Activated CD4-positive, alpha-beta memory T cell treated with anti-CD3 and anti-CD28 coated beads for 36 hours (primary cell): ENCODE measurements at regions of chr5 and their contacts with region 1.

Region 1: DNA sequence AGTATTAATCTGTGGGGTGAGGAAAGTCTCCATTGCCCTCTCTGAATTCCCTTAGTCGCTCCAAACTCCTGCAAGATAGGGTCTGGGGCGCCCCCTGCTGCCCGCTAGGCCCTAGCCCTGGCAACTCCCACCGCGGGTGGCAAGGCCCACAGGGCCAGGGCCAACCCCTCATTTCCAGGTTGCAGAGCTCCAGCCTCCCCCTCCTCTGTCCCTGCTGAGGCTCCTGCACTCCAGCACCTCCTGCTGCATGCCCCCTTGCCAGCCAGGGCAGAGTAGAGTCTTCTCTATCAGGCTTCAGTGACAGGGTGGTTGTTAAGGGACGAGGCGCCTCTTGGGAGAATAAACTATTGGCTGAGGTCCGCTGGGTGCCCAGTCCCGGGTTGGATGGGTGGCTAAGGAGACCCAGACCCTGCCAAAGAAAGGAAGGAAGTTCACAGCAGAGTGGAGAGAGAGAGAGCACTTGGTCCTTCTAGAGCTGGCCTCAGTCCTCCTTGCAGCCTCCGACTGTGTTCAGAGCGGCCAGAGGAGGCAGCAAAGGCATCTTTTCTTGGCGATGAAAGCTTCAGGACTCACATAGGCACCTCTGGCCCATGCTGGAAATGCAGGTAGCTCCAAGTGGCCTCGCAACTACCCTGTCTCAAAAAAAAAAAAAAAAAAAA is 45.6 kb downstream of the SAR1B start:
- DNase-seq: peak; percentile 92
- H3K4me3 Mint-ChIP-seq: no peak overlapping the region
- H3K27ac Mint-ChIP-seq: peak overlapping the region; percentile 16
- H3K4me1 Mint-ChIP-seq: peaks cover 16% of the 10 kb centered on the region
- H3K27me3 Mint-ChIP-seq: no peaks in the 10 kb centered on the region

Region 2: DNA sequence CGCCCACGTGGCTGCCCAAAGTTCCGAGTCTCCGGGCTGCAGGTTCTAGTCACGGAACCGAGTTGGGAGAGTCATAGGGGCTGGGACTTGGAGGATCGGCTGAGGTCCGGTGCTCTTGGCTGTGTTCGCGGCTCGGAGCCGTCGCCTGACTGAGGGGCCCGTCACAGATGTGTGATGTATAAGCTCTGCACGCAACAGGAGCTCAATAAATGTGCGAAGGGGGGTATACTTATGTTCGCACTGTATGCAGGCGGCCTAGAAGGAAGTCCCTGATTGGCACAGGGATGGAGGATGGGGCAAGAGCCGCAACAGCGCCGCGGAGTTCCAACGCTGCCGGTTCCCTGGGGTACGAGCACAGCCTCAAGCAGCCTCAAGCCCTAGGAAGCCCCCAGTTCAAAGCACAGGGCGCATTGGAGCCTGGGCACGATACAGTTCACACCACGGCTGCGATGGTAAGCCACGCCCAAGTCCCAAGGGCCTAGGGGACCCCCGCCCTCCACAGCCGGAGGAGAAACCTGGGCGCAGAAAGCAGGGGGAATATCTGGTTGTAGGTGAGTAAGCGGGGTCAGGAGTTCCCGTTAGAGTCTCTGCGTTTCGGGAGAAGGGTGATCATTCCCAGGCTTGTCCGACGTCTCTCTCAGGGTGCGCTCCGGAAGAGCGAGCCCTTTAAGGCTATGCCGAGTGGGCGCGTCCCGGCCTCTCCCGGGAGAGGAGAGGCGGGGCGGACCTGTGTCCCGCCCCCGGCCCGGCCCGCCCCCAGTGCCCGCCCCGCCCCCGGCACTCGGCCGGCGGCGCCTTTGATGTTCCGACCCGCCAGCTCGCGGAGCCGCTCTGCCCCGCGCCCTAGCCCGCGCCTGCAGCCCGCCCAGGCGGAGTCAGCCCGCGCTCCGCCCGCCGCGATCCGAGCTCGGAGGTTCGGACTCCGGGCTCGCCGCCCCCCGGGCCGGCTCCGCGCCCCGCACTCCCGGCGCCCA is 472.8 kb before region 1 on chr5 and contains the start of gene TCF7:
- CTCF ChIA-PET with region 1: no interaction called
- POLR2A ChIA-PET with region 1: no interaction called
- intact Hi-C with region 1: no loop called
- DNase-seq: peak; percentile 86
- H3K4me3 Mint-ChIP-seq: peak within 1 kb of the TSS; percentile 84
- H3K27ac Mint-ChIP-seq: peak within 1 kb of the TSS; percentile 86
- H3K4me1 Mint-ChIP-seq: peaks cover 66% of the 10 kb centered on the region
- H3K27me3 Mint-ChIP-seq: no peaks in the 10 kb centered on the region
- total RNA-seq, gene TCF7: 59.3 to 65.6 TPM

Region 3: DNA sequence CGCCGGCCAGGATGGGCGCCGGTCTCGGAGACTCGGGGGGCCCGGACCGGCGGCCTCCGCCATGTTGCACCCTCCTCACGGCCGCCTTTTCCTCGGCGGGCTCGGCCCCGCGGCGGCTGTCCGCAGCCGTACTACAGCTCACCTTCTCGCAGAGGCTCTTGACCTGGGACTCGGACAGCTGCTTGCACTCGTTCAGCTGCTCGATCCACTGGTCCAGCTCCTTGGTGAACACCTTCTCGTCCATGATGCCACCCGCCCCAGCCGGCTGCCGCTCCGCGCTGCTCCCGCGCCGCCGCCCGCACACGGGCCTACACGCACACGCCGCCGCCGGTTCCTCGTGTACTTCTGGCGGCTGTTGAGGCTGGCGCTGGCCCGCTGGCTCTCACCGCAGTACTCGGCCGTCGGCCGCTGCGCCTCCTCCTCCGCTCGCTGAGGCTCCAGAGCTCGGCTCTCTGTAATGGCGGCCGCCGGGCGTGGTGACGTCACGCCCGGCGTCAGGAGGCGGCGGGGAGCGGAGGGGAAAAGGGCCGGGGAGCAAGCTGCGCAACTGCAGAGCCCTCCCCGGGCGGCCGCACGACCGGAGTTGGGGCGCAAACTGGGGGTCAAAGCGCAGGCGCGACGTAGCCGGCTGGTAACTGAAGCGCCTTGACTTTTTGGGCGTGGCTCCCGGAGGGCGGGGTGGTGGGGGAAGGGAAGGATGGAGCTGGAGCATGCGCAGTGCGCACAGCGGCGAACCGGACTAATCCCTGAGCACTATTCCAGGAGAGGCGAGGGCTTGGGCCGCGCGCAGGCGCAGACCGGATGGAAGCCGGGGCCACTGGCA is 361.2 kb before region 1 on chr5 and contains the start of gene PPP2CA:
- CTCF ChIA-PET with region 1: interaction called, 11 read pairs
- POLR2A ChIA-PET with region 1: no interaction called
- intact Hi-C with region 1: no loop called
- DNase-seq: peak; percentile 100
- H3K4me3 Mint-ChIP-seq: peak within 1 kb of the TSS; percentile 95
- H3K27ac Mint-ChIP-seq: peak within 1 kb of the TSS; percentile 97
- H3K4me1 Mint-ChIP-seq: peaks cover 50% of the 10 kb centered on the region
- H3K27me3 Mint-ChIP-seq: no peaks in the 10 kb centered on the region
- total RNA-seq, gene PPP2CA: 144 to 164 TPM

Region 4: GRCh38 chr5:134370871-134371833 is 215.8 kb before region 1 on chr5 and contains the start of gene UBE2B:
- CTCF ChIA-PET with region 1: interaction called, 16 read pairs
- POLR2A ChIA-PET with region 1: interaction called, 7 read pairs
- intact Hi-C with region 1: no loop called
- DNase-seq: peak; percentile 98
- H3K4me3 Mint-ChIP-seq: peak within 1 kb of the TSS; percentile 92
- H3K27ac Mint-ChIP-seq: peak within 1 kb of the TSS; percentile 96
- H3K4me1 Mint-ChIP-seq: peaks cover 55% of the 10 kb centered on the region
- H3K27me3 Mint-ChIP-seq: peaks cover 2% of the 10 kb centered on the region
- total RNA-seq, gene UBE2B: 124 TPM

Region 5: GRCh38 chr5:134541736-134542376 is 45.1 kb before region 1 on chr5:
- CTCF ChIA-PET with region 1: interaction called, 10 read pairs
- POLR2A ChIA-PET with region 1: no interaction called
- intact Hi-C with region 1: no loop called
- DNase-seq: peak; percentile 49
- H3K4me3 Mint-ChIP-seq: no peak overlapping the region
- H3K27ac Mint-ChIP-seq: peak overlapping the region; percentile 66
- H3K4me1 Mint-ChIP-seq: peaks cover 67% of the 10 kb centered on the region
- H3K27me3 Mint-ChIP-seq: no peaks in the 10 kb centered on the region

Region 6: DNA sequence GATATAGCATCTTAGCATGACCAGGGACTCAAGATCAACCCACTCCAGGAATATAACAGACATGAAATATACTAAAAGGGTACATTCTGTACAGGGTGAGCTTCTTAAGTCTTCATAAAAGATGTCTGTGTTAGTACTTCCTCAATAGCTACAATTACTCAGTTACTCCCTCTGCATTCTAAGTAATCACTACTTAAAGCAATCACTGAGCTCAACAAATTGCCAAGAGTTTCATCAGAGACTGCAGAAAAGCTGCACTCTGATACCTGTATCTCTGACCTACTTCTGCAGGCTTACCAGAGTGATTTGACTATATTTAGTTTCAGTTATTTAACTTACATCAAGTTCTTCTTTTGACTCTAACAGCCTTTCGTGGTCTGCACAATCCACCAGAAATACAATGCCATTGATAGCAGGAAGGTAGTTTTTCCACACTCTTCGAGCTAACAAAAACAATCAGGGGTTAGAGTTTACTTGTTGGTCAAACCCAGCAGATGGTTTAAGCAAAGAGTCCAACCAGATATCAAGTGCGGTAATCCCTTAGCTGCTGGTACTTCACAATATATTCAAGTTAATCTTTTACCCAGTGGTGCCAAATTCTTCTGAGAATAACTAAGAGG is 22.3 kb after region 1 on chr5:
- CTCF ChIA-PET with region 1: interaction called, 39 read pairs
- POLR2A ChIA-PET with region 1: interaction called, 4 read pairs
- intact Hi-C with region 1: no loop called
- DNase-seq: peak; percentile 19
- H3K4me3 Mint-ChIP-seq: peak overlapping the region; percentile 52
- H3K27ac Mint-ChIP-seq: peak overlapping the region; percentile 97
- H3K4me1 Mint-ChIP-seq: peaks cover 54% of the 10 kb centered on the region
- H3K27me3 Mint-ChIP-seq: no peaks in the 10 kb centered on the region

Region 7: GRCh38 chr5:134648425-134649162 is 61.6 kb after region 1 on chr5 and contains the start of gene SEC24A:
- CTCF ChIA-PET with region 1: interaction called, 12 read pairs
- POLR2A ChIA-PET with region 1: interaction called, 4 read pairs
- intact Hi-C with region 1: no loop called
- DNase-seq: peak; percentile 95
- H3K4me3 Mint-ChIP-seq: peak within 1 kb of the TSS; percentile 81
- H3K27ac Mint-ChIP-seq: peak within 1 kb of the TSS; percentile 99
- H3K4me1 Mint-ChIP-seq: peaks cover 22% of the 10 kb centered on the region
- H3K27me3 Mint-ChIP-seq: no peaks in the 10 kb centered on the region
- total RNA-seq, gene SEC24A: 30.8 to 31.4 TPM